ENCODE measurements at regions of chr22 and their contacts with region 1.

Region 1: DNA sequence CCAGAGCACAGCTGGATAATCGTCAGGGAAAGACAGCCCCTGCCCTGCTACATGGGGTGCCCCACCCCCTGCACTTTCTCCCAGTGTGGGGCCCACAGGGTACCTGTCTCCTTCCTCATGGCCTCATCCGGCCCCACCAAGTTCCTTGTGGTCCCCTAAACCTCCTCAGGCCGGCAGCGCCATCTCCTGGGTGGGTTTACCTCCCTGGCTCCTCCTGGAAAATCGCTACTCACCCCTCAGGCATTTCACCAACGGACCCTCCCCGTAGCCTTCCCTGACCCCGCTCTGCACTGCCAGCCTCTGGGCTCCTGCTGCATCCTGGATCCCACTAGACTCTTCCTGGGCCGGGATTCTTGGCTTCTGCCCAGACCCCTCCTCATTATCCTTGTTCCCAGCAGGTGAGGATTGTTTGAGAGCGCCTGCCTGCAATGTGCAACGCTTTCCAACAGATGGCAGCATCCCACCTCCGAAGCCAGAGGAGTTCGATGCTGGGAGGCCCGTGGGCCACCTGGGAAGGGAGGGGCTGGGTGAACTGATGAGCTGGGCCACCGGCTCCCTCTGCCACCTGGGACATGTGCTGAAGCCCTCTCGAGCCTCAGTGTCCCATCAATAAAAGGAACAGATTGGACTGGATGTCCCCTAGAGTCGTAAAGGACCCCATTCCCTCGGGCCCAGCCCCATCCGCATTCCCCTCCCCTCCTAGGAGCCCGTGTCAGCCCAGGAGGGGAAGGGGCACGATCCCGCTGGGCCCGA is 44.2 kb upstream of the TTLL12 start:
- DNase-seq: peak; percentile 48
- ATAC-seq: peak; percentile 61
- H3K4me3 ChIP-seq: no peak overlapping the region
- H3K27ac ChIP-seq: no peak overlapping the region
- H3K4me1 ChIP-seq: peaks cover 40% of the 10 kb centered on the region
- H3K27me3 ChIP-seq: peaks cover 5 to 50% of the 10 kb centered on the region in 2 experiments
- CTCF ChIP-seq: peak; percentile 97
- EP300 ChIP-seq: no peak
- POLR2A ChIP-seq: no peak
- RAD21 ChIP-seq: peak; percentile 91

Region 2: GRCh38 chr22:43273902-43274484 is 42.8 kb after region 1 on chr22:
- CTCF ChIA-PET with region 1: interaction called, 11 read pairs
- POLR2A ChIA-PET with region 1: no interaction called
- in situ Hi-C with region 1: loop called (anchors 5 kb)
- intact Hi-C with region 1: loop called (anchors 1 kb)
- DNase-seq: peak; percentile 47
- ATAC-seq: peak; percentile 58
- H3K4me3 ChIP-seq: no peak overlapping the region
- H3K27ac ChIP-seq: no peak overlapping the region
- H3K4me1 ChIP-seq: peaks cover 8% of the 10 kb centered on the region
- H3K27me3 ChIP-seq: peaks cover 11 to 46% of the 10 kb centered on the region in 2 experiments
- CTCF ChIP-seq: peak; percentile 89
- EP300 ChIP-seq: no peak
- POLR2A ChIP-seq: no peak
- RAD21 ChIP-seq: peak; percentile 73